MCF 10A (cell line): ENCODE measurements at regions of chr22 and their contacts with region 1.

Region 1: GRCh38 chr22:38506118-38506962 is at the start of gene DDX17:
- DNase-seq: peak; percentile 93
- H3K4me3 Mint-ChIP-seq: peak within 1 kb of the TSS; percentile 81
- H3K27ac Mint-ChIP-seq: peak within 1 kb of the TSS; percentile 99
- H3K4me1 Mint-ChIP-seq: peaks cover 24% of the 10 kb centered on the region
- H3K27me3 Mint-ChIP-seq: no peaks in the 10 kb centered on the region
- CTCF ChIP-seq: no peak
- total RNA-seq, gene DDX17: 322 and 422 TPM in 2 replicates

Region 2: GRCh38 chr22:38398609-38399461 is 107.5 kb before region 1 on chr22:
- CTCF ChIA-PET with region 1: no interaction called
- POLR2A ChIA-PET with region 1: interaction called, 6 read pairs
- intact Hi-C with region 1: loop called (anchors 5 kb)
- DNase-seq: peak; percentile 77
- H3K4me3 Mint-ChIP-seq: peak overlapping the region; percentile 77
- H3K27ac Mint-ChIP-seq: peak overlapping the region; percentile 31
- H3K4me1 Mint-ChIP-seq: peaks cover 7% of the 10 kb centered on the region
- H3K27me3 Mint-ChIP-seq: no peaks in the 10 kb centered on the region
- CTCF ChIP-seq: no peak

Region 3: GRCh38 chr22:38490915-38491314 is 15.4 kb before region 1 on chr22:
- CTCF ChIA-PET with region 1: interaction called, 10 read pairs
- POLR2A ChIA-PET with region 1: interaction called, 12 read pairs
- intact Hi-C with region 1: no loop called
- DNase-seq: no peak
- H3K4me3 Mint-ChIP-seq: no peak overlapping the region
- H3K27ac Mint-ChIP-seq: no peak overlapping the region
- H3K4me1 Mint-ChIP-seq: peaks cover 5% of the 10 kb centered on the region
- H3K27me3 Mint-ChIP-seq: no peaks in the 10 kb centered on the region
- CTCF ChIP-seq: no peak

Region 4: GRCh38 chr22:38540701-38541100 is 34.4 kb after region 1 on chr22:
- CTCF ChIA-PET with region 1: no interaction called
- POLR2A ChIA-PET with region 1: no interaction called
- intact Hi-C with region 1: no loop called
- DNase-seq: no peak
- H3K4me3 Mint-ChIP-seq: no peak overlapping the region
- H3K27ac Mint-ChIP-seq: no peak overlapping the region
- H3K4me1 Mint-ChIP-seq: no peaks in the 10 kb centered on the region
- H3K27me3 Mint-ChIP-seq: no peaks in the 10 kb centered on the region
- CTCF ChIP-seq: no peak

Region 5: GRCh38 chr22:38656256-38657044 is 150.1 kb after region 1 on chr22 and contains the starts of genes CBY1 and FAM227A:
- CTCF ChIA-PET with region 1: no interaction called
- POLR2A ChIA-PET with region 1: interaction called, 3 read pairs
- intact Hi-C with region 1: loop called (anchors 10 kb)
- DNase-seq: peak; percentile 89
- H3K4me3 Mint-ChIP-seq: peak within 1 kb of the TSS; percentile 93
- H3K27ac Mint-ChIP-seq: peak within 1 kb of the TSS; percentile 100
- H3K4me1 Mint-ChIP-seq: no peaks in the 10 kb centered on the region
- H3K27me3 Mint-ChIP-seq: no peaks in the 10 kb centered on the region
- CTCF ChIP-seq: no peak
- total RNA-seq, gene CBY1: 40.6 and 42.1 TPM in 2 replicates
- total RNA-seq, gene FAM227A: 2.3 and 2.6 TPM in 2 replicates